Tibial artery (tissue), 4 donors: ENCODE measurements at regions of chr19 and their contacts with region 1.

Region 1: DNA sequence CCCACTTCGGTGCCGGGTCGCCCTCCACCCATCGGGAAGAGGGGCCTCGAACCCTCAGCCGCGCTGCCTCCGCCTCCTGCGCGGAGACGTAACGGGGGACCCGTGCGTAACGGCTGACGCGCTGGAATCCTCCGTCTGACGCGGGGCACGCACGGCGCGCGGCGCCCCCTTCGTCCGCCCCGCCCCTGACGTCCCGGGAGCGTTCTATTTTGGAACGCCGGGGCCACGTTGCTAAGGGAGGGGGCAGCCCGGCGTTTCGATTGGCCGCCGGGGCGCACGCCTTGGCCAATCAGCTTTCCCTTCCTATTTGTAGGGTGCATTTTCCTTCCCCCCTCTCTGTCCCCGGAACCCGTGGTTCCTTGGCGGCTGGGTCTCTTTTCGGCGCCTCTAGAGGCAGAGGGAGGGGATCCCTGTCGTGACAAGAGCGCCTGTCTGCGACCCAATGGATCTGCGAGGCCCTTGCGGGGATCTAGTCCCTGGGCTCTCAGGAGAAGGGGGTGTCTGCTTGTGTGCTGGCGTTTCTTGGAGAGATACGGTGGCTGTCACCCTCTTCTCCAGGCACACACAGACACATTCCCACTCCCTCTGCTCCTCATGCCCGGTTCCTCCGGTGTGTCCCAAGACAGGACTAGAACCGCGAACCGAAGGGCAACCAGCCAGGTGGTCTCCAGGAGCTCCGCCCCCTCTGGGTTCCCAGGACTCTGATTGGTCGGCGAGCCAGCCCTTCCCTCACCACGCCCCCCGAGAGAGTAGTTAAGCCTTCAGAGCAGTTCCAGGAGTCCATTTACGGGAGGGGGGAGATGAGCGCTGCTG is 1.5 kb downstream of the FOSB start:
- DNase-seq: peak; percentile 92 to 97
- H3K4me3 ChIP-seq: peak overlapping the region; percentile 62
- H3K27ac ChIP-seq: peak overlapping the region; percentile 89 to 95
- H3K4me1 ChIP-seq: peaks cover 0 to 37% (median 27%) of the 10 kb centered on the region in 4 donors
- H3K27me3 ChIP-seq: peaks cover 0 to 3% of the 10 kb centered on the region in 2 donors
- CTCF ChIP-seq: no peak

Region 2: GRCh38 chr19:45331423-45331822 is 137.9 kb before region 1 on chr19:
- intact Hi-C with region 1: no loop called
- DNase-seq: no peak
- H3K4me3 ChIP-seq: no peak overlapping the region
- H3K27ac ChIP-seq: no peak overlapping the region
- H3K4me1 ChIP-seq: peaks cover 0 to 1% (median 0%) of the 10 kb centered on the region in 4 donors
- H3K27me3 ChIP-seq: peaks cover 0 to 10% of the 10 kb centered on the region in 2 donors
- CTCF ChIP-seq: no peak

Region 3: DNA sequence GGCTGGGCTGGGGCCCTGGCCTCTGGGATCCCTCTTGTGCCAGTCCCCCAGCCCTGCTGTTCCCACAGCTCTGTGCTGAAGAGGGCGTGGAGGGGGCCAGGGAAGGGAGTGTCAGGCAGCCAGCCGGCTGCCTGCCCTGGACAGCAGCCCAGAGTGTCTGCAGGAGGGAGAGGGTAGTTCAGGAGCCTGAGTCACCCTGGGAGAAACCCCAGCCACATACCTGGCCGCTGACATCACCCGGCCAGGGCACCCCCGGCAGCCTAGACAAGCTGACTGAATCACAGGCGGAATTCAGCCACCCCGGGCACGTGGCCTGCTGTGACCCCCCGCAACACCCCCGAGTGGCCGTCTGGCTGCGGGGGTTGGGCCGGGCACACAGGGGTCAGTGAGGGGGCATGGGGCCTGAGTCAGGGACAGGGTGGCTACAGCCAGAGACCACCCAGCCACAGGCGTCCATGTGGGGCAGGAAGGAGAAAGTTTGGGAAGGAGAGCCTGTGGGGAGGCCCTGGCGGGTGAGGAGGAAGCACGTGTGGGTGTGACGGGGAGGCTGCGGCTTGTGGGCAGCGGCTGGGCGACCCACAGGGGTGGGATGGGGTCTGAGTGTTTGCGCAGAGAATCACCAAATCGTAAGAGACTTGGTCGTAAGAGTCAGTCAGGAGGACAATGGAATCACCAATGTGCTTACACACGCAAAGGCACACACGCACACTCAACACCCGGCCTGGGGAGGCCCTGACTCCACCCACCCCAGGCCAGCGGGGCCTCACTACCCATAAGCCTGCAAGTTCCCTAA is 13.4 kb before region 1 on chr19:
- intact Hi-C with region 1: loop called (anchors 2 kb)
- DNase-seq: peak; percentile 92 to 98
- H3K4me3 ChIP-seq: peak overlapping the region; percentile 20 to 34
- H3K27ac ChIP-seq: peak overlapping the region; percentile 79 to 80
- H3K4me1 ChIP-seq: peaks cover 0 to 39% (median 32%) of the 10 kb centered on the region in 4 donors
- H3K27me3 ChIP-seq: peaks cover 0 to 3% of the 10 kb centered on the region in 2 donors
- CTCF ChIP-seq: peak in 1 of 2 experiments; percentile 28